MCF 10A (cell line): ENCODE measurements at regions of chr2 and their contacts with region 1.

Region 1: DNA sequence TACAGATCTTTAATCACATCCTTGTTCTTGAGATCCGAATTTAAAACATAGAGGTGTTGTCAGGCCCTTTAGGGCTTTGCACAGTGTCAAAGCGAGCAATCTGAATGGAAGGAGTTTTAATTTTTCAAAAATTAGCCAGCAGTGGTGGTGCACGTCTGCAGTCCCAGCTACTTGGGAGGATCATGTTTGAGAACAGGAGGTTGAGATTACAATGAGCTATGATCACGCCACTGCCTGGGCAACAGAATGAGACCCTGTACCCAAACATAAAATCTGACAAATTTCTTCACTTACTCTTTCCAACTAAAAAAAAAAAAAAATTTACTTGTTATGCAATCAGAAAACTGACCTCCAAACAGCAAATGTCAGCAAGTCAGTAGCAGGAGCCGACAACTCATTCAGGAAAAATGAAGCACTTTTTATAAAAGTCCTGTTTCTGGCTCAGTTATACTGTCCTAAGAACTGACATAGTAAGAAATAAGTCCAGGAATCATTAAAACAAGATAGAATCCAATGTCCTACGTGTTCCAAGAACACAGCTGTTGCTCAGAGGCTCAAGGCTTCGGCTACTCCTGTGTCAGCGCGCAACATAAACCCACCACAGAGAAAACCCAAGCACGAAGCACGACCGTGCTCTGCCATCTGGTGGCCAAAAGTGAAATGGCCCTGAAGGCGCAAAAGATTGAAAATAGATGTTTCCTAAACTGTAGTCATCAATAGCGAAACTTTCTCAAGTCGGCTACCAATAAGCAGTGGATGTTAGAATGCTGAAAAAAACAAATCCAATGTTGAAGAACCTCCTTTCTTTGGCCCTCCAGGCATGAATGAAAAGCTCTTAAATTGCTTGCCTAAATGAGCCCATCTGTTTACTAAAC is 138.1 kb downstream of the INO80D start:
- DNase-seq: peak; percentile 62
- H3K4me3 Mint-ChIP-seq: no peak overlapping the region
- H3K27ac Mint-ChIP-seq: no peak overlapping the region
- H3K4me1 Mint-ChIP-seq: peaks cover 14% of the 10 kb centered on the region
- H3K27me3 Mint-ChIP-seq: no peaks in the 10 kb centered on the region
- CTCF ChIP-seq: peak; percentile 79

Region 2: DNA sequence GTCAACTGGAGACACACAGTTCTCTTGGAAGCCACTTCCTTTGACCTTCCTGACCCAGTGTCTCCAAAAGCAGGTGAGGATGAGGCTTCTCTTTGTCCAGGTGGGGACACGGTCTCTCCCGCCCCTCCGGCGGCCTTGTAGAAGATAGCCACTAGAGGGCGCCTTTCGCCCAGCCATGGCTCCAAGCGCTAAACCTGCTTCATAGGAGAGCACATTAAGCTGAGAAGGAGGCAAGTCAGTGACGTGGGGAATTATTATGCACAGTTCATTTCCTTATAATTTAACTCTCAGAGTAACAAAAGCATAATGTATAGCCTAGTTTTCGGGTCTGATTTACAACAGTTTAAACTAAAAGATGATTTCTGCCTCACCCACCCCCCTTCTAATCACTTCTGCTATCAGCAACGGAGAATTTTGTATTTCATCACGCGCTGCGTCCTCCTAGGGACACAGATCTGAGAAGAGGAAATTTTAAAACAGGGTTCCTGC is 1802.6 kb before region 1 on chr2:
- CTCF ChIA-PET with region 1: interaction called, 8 read pairs
- POLR2A ChIA-PET with region 1: no interaction called
- intact Hi-C with region 1: loop called (anchors 1 kb)
- DNase-seq: peak; percentile 81
- H3K4me3 Mint-ChIP-seq: peak overlapping the region; percentile 69
- H3K27ac Mint-ChIP-seq: no peak overlapping the region
- H3K4me1 Mint-ChIP-seq: peaks cover 5% of the 10 kb centered on the region
- H3K27me3 Mint-ChIP-seq: peaks cover 57% of the 10 kb centered on the region
- CTCF ChIP-seq: peak; percentile 90

Region 3: DNA sequence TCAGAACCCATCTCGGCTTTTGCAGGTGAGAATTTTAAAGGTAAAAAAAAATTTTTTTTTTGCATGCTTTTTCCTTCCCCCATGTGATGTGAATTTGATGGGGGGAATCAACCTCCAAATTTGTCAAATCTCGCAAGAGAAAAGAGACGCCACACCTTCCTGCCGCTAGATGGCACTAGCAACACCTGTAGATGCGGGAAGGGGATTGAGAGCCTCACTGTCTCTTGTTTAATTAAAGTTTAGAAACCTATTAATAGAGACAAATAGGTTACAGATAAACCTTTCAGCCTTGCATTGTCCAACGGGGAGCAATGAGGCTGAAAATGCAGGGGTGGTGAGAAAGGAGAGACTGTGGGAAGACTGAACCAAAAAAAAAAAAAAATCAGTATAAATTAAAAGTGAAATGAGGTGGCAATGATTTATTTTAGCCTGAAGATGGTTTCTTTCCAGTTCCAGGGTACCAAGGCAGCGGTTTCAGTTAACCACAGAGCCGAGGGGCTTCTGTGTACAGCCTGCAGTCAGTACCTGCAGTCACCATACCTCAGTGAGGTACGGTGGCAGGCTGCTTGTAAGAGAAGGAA is 181.0 kb before region 1 on chr2:
- CTCF ChIA-PET with region 1: interaction called, 4 read pairs
- POLR2A ChIA-PET with region 1: no interaction called
- intact Hi-C with region 1: loop called (anchors 1 kb)
- DNase-seq: peak; percentile 70
- H3K4me3 Mint-ChIP-seq: no peak overlapping the region
- H3K27ac Mint-ChIP-seq: no peak overlapping the region
- H3K4me1 Mint-ChIP-seq: peaks cover 19% of the 10 kb centered on the region
- H3K27me3 Mint-ChIP-seq: no peaks in the 10 kb centered on the region
- CTCF ChIP-seq: peak; percentile 79

Region 4: GRCh38 chr2:205845446-205845845 is 102.4 kb before region 1 on chr2:
- CTCF ChIA-PET with region 1: no interaction called
- POLR2A ChIA-PET with region 1: no interaction called
- intact Hi-C with region 1: no loop called
- DNase-seq: no peak
- H3K4me3 Mint-ChIP-seq: no peak overlapping the region
- H3K27ac Mint-ChIP-seq: no peak overlapping the region
- H3K4me1 Mint-ChIP-seq: peaks cover 4% of the 10 kb centered on the region
- H3K27me3 Mint-ChIP-seq: no peaks in the 10 kb centered on the region
- CTCF ChIP-seq: no peak

Region 5: DNA sequence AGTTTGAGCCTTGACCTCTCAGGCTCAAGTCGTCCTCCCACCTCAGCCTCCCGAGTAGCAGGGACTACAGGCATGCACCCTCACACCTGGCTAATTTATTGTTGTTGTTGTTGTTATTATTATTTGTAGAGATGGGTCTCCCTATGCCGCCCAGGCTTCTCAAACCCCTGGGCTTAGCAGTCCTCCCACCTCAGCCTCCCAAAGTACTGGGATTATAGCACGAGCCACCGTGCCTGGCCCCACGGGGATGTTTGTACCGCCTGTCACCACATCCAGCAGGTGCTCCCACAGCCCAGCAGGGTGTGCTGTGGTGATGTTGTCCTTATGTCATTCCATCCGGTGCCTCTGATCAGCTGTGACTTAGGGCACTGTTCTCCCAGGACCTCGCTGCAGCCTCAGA is 44.2 kb before region 1 on chr2:
- CTCF ChIA-PET with region 1: interaction called, 4 read pairs
- POLR2A ChIA-PET with region 1: no interaction called
- intact Hi-C with region 1: loop called (anchors 5 kb)
- DNase-seq: peak; percentile 49
- H3K4me3 Mint-ChIP-seq: no peak overlapping the region
- H3K27ac Mint-ChIP-seq: no peak overlapping the region
- H3K4me1 Mint-ChIP-seq: no peaks in the 10 kb centered on the region
- H3K27me3 Mint-ChIP-seq: peaks cover 11% of the 10 kb centered on the region
- CTCF ChIP-seq: peak; percentile 11

Region 6: GRCh38 chr2:205967391-205968075 is 19.7 kb after region 1 on chr2:
- CTCF ChIA-PET with region 1: interaction called, 22 read pairs
- POLR2A ChIA-PET with region 1: no interaction called
- intact Hi-C with region 1: no loop called
- DNase-seq: no peak
- H3K4me3 Mint-ChIP-seq: no peak overlapping the region
- H3K27ac Mint-ChIP-seq: no peak overlapping the region
- H3K4me1 Mint-ChIP-seq: peaks cover 5% of the 10 kb centered on the region
- H3K27me3 Mint-ChIP-seq: no peaks in the 10 kb centered on the region
- CTCF ChIP-seq: no peak